ENCODE measurements at regions of chr5 and their contacts with region 1.

Region 1: DNA sequence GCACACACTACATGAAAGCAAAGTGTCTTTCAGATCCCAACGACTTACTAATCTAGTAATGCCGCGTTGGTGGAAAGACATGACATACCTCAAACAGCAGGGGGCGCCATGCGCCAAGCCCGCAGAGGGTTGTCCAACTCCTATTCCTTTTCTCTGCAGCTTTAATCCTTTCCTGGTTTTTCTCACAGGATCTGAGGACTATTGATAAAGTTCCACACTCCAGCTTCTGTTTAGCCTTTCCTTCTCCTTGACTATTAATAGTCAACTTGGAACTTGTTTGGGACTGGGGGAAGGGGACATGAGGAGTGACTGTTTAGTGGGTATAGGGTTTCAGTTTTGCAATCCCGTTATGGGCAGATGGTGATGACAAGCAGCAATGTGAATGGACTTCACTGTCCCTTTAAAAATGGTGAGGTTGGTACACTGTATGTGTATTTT is 62.9 kb downstream of the OTULIN start:
- DNase-seq: peak; percentile 81 to 92 (median 88)
- H3K4me3 ChIP-seq: peak overlapping the region in 7 of 59 donors; percentile 1 to 12 (median 3)
- H3K27ac ChIP-seq: peak overlapping the region; percentile 44 to 100 (median 95)
- H3K27me3 ChIP-seq: no peaks in the 10 kb centered on the region
- CTCF ChIP-seq: peak; percentile 93 to 100 (median 98)

Region 2: GRCh38 chr5:14685757-14686156 is 41.7 kb before region 1 on chr5:
- intact Hi-C with region 1: loop called in 1 of 2 experiments (anchors 5 kb)
- DNase-seq: peak in 2 of 10 donors; percentile 42 to 50
- H3K4me3 ChIP-seq: peak overlapping the region in 13 of 59 donors; percentile 3 to 41 (median 22)
- H3K27ac ChIP-seq: peak overlapping the region in 3 of 59 donors; percentile 7 to 31 (median 12)
- H3K27me3 ChIP-seq: no peaks in the 10 kb centered on the region
- CTCF ChIP-seq: peak; percentile 47 to 89 (median 76)

Region 3: GRCh38 chr5:14779975-14780374 is 52.5 kb after region 1 on chr5:
- intact Hi-C with region 1: loop called in 1 of 2 experiments (anchors 1 kb)
- DNase-seq: peak in 1 of 10 donors; percentile 35
- H3K4me3 ChIP-seq: peak overlapping the region in 1 of 59 donors; percentile 6
- H3K27ac ChIP-seq: peak overlapping the region in 13 of 59 donors; percentile 5 to 68 (median 25)
- H3K27me3 ChIP-seq: no peaks in the 10 kb centered on the region
- CTCF ChIP-seq: no peak

Region 4: DNA sequence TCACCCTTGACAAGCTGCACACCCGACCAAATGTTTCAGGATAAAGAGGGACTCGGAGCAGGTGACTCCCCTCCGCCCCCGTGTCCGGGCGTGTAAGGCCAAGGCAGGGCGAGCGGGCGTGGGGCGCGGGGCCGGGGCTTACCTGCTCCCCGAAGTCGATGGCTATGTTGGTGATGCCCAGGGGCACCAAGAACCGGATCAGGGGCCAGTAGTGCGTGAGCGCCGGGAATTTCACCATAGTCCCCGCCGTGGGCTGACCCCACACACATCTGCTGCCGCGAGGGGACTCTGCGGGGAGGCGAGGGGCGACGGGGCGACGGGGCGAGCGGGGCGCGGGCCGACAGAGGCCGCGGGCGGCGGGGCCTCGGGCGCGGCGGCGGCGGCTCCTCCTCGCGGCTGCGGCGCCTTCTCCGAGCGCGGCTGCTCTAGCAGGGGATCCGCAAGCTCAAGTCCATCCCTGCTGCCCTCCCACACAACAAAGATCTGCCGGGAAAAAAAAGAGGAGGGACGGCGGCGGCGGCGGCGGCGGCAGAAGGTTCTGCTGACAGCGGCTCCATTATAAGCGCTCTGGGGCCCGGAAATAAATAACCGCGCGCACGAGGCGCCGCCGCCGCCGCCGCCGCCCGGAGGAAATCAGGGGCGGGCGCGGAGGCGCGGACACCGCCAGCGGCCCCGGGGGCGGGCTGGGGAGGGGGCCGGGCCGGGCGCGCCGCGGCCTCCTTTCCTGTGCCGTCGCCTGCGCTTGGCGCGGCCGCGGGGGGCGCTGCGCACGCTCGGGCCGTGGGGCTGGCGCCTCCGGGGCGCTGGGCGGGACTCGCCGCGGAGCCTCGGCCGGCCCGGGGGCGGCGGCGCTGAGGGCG is 144.0 kb after region 1 on chr5 and contains the start of gene ANKH:
- intact Hi-C with region 1: loop called (anchors 2 kb)
- DNase-seq: peak; percentile 42 to 85 (median 64)
- H3K4me3 ChIP-seq: peak within 1 kb of the TSS; percentile 63 to 97 (median 87)
- H3K27ac ChIP-seq: peak within 1 kb of the TSS; percentile 55 to 97 (median 92)
- H3K27me3 ChIP-seq: no peaks in the 10 kb centered on the region
- CTCF ChIP-seq: peak in 1 of 56 donors; percentile 4
- total RNA-seq, gene ANKH: 182 to 332 (median 241) TPM

Region 5: GRCh38 chr5:14946815-14947640 is 219.6 kb after region 1 on chr5:
- intact Hi-C with region 1: loop called in 1 of 2 experiments (anchors 5 kb)
- DNase-seq: no peak
- H3K4me3 ChIP-seq: no peak overlapping the region
- H3K27ac ChIP-seq: no peak overlapping the region
- H3K27me3 ChIP-seq: no peaks in the 10 kb centered on the region
- CTCF ChIP-seq: peak in 29 of 56 donors; percentile 15 to 41 (median 27)

Region 6: GRCh38 chr5:15003511-15003920 is 276.1 kb after region 1 on chr5:
- intact Hi-C with region 1: loop called (anchors 1 to 2 kb)
- DNase-seq: peak; percentile 35 to 80 (median 62)
- H3K4me3 ChIP-seq: no peak overlapping the region
- H3K27ac ChIP-seq: no peak overlapping the region
- H3K27me3 ChIP-seq: no peaks in the 10 kb centered on the region
- CTCF ChIP-seq: peak; percentile 65 to 98 (median 93)

Measured in dorsolateral prefrontal cortex (tissue), 120 donors.